CD8-positive, alpha-beta T cell (primary cell): ENCODE measurements at regions of chr3 and their contacts with region 1.

Region 1: DNA sequence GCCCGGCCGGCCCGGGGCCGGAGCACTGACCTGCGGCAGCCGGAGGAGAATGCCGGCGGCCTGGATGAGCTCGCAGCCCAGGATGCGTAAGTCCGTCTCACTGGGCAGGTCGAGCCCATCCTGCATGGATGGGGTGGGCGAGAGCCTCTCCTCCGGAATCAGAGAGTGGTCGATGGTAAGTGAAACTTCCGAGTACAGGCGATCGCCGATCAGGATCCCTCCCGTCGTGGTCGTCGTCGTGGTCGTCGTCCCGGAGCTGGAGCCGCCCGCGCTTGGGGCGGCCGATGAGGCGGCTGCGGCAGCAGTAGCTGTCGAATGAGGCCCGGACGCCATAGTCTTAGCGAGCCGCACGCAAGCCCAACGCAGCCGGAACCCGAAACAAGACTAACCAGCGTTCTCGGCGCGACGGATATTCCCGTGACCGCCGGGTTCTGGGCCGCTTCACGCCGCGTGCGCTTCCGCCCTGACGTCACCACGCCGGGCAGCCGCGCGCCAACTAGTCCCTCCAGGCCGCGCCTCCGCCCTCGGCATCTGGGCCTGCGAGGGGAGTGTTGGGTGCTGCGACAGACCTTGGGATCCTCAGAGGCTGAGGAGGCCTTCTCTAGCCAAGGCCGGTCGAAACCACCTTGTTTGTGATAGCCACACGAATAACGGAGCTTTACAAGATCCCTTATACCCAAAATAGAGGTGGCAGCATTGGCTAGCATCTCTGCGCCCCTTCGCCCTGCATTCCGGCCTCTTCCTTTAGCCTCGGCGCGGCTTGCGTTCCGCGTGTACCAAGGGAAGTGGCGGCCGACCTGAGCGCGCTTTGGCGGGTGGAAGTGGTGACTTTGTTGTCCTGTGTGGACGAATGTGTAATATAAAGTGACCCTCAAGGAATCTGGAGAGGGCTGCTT is at the start of gene CCNL1:
- DNase-seq: peak; percentile 92 to 99 (median 95)
- ATAC-seq: peak; percentile 70
- H3K4me3 ChIP-seq: peak within 1 kb of the TSS; percentile 79 to 84
- H3K4me3 Mint-ChIP-seq: peak within 1 kb of the TSS; percentile 96
- H3K27ac ChIP-seq: peak within 1 kb of the TSS; percentile 99 to 100
- H3K27ac Mint-ChIP-seq: peak within 1 kb of the TSS; percentile 100
- H3K4me1 ChIP-seq: peaks cover 50% of the 10 kb centered on the region
- H3K4me1 Mint-ChIP-seq: peaks cover 54% of the 10 kb centered on the region
- H3K27me3 ChIP-seq: no peaks in the 10 kb centered on the region
- H3K27me3 Mint-ChIP-seq: no peaks in the 10 kb centered on the region
- CTCF ChIP-seq: no peak
- total RNA-seq, gene CCNL1: 1,161 to 1,206 TPM

Region 2: DNA sequence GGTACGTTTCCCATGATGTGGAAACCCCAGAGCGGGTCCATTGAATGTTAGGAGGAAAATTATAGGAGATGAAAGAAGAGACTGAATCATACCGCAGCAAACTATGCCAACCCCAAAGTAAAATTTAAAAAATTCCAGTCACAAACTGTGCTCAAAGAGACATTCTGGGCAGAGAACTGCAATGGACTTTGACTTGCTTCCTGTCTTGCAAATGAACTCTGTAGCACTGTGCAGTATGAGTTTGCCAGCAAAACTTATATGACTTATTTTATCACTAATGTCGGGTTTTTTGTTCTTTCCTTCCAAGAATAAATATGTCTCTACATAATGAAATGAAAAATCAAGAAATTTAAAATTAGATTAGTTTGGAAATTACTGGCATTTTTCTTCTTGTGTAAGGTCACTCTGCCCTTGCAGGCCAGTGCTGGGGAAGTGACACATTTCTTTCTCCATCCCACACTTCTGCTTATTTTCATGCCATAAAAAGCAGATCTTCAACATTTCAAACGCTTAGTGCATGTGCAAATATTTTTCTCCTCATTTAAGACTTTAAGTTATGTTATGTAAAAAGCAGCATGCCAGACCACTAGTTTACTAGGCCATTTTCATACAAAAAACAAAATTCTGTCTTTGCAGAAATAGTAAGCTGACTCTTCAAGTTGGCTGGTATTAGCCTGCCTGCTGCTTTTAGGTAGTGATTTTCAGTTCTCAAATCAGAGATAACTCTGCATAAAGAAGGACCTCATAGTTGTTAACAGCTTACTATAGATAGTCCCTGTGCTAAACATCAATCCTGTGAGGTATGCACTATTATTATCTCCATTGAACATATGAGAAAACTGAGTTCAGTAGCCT is 572.9 kb before region 1 on chr3:
- CTCF ChIA-PET with region 1: no interaction called
- POLR2A ChIA-PET with region 1: no interaction called
- intact Hi-C with region 1: no loop called
- DNase-seq: no peak
- ATAC-seq: no peak
- H3K4me3 ChIP-seq: no peak overlapping the region
- H3K4me3 Mint-ChIP-seq: no peak overlapping the region
- H3K27ac ChIP-seq: no peak overlapping the region
- H3K27ac Mint-ChIP-seq: no peak overlapping the region
- H3K4me1 ChIP-seq: no peaks in the 10 kb centered on the region
- H3K4me1 Mint-ChIP-seq: no peaks in the 10 kb centered on the region
- H3K27me3 ChIP-seq: no peaks in the 10 kb centered on the region
- H3K27me3 Mint-ChIP-seq: no peaks in the 10 kb centered on the region
- CTCF ChIP-seq: no peak

Region 3: DNA sequence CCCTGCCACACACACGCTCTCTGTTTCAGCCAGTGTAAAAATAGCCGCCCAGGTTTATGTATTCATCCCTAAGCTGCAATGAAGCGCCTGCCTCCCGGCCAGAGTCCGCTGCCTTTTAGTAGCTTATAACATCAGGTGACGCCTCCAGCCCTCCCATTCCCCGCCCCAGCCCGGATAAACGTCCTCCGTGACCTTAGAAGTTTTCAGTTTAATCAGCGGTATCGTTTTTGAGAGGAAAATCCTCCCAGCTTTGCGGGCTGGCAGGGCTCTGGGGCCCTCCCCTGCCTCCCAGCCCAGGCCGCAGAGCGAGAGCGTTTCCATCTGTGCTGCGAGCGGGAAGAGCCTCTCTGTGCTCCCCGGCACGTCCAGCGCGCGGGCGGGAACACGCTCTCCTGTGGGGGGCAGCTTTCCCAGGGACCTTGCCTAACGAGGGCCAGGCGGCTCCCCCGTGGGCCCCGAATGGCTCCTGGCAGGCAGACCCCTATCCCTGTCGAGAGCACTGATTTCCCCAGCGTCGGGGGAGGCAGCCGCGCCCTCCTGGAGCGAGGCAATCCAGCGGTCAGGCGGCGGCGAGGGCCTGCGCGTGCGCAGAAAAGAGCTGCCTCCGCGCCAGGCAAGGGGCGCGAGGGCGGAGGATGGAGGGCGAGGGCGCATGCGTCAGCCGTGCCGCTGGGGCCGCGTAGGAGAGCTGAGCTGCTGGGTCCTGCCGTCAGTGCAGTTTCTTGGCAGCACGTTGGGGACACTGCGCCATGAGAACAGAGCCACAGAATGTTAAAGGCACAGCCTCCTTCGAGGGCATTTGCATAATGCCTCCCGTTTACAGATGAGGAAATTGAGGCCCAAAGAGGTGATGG is 71.2 kb before region 1 on chr3:
- CTCF ChIA-PET with region 1: no interaction called
- POLR2A ChIA-PET with region 1: interaction called, 26 read pairs
- intact Hi-C with region 1: loop called in 1 of 2 experiments (anchors 2 kb)
- DNase-seq: peak; percentile 87 to 97 (median 93)
- ATAC-seq: peak; percentile 92
- H3K4me3 ChIP-seq: peak overlapping the region; percentile 96 to 98
- H3K4me3 Mint-ChIP-seq: peak overlapping the region; percentile 88
- H3K27ac ChIP-seq: peak overlapping the region; percentile 88 to 95
- H3K27ac Mint-ChIP-seq: peak overlapping the region; percentile 96
- H3K4me1 ChIP-seq: peaks cover 18% of the 10 kb centered on the region
- H3K4me1 Mint-ChIP-seq: peaks cover 26% of the 10 kb centered on the region
- H3K27me3 ChIP-seq: no peaks in the 10 kb centered on the region
- H3K27me3 Mint-ChIP-seq: no peaks in the 10 kb centered on the region
- CTCF ChIP-seq: no peak

Region 4: GRCh38 chr3:157148196-157148889 is 11.7 kb before region 1 on chr3:
- CTCF ChIA-PET with region 1: interaction called, 4 read pairs
- POLR2A ChIA-PET with region 1: interaction called, 35 read pairs
- intact Hi-C with region 1: loop called in 1 of 2 experiments (anchors 1 kb)
- DNase-seq: peak in 1 of 9 experiments; percentile 33
- ATAC-seq: peak; percentile 17
- H3K4me3 ChIP-seq: no peak overlapping the region
- H3K4me3 Mint-ChIP-seq: no peak overlapping the region
- H3K27ac ChIP-seq: no peak overlapping the region
- H3K27ac Mint-ChIP-seq: peak overlapping the region; percentile 20
- H3K4me1 ChIP-seq: peaks cover 4% of the 10 kb centered on the region
- H3K4me1 Mint-ChIP-seq: peaks cover 41% of the 10 kb centered on the region
- H3K27me3 ChIP-seq: no peaks in the 10 kb centered on the region
- H3K27me3 Mint-ChIP-seq: no peaks in the 10 kb centered on the region
- CTCF ChIP-seq: no peak

Region 5: GRCh38 chr3:157201648-157202278 is 41.8 kb after region 1 on chr3:
- CTCF ChIA-PET with region 1: interaction called, 5 read pairs
- POLR2A ChIA-PET with region 1: interaction called, 13 read pairs
- intact Hi-C with region 1: loop called in 1 of 2 experiments (anchors 1 kb)
- DNase-seq: peak in 2 of 9 experiments; percentile 44 to 59
- ATAC-seq: no peak
- H3K4me3 ChIP-seq: no peak overlapping the region
- H3K4me3 Mint-ChIP-seq: no peak overlapping the region
- H3K27ac ChIP-seq: no peak overlapping the region
- H3K27ac Mint-ChIP-seq: no peak overlapping the region
- H3K4me1 ChIP-seq: no peaks in the 10 kb centered on the region
- H3K4me1 Mint-ChIP-seq: no peaks in the 10 kb centered on the region
- H3K27me3 ChIP-seq: no peaks in the 10 kb centered on the region
- H3K27me3 Mint-ChIP-seq: no peaks in the 10 kb centered on the region
- CTCF ChIP-seq: no peak

Region 6: GRCh38 chr3:158109804-158110657 is 950.0 kb after region 1 on chr3 and contains the start of gene RSRC1:
- CTCF ChIA-PET with region 1: no interaction called
- POLR2A ChIA-PET with region 1: interaction called, 6 read pairs
- intact Hi-C with region 1: loop called in 1 of 2 experiments (anchors 5 kb)
- DNase-seq: peak; percentile 48 to 89 (median 78)
- ATAC-seq: peak; percentile 89
- H3K4me3 ChIP-seq: peak within 1 kb of the TSS; percentile 76 to 82
- H3K4me3 Mint-ChIP-seq: peak within 1 kb of the TSS; percentile 93
- H3K27ac ChIP-seq: peak within 1 kb of the TSS; percentile 61 to 69
- H3K27ac Mint-ChIP-seq: peak within 1 kb of the TSS; percentile 85
- H3K4me1 ChIP-seq: peaks cover 44% of the 10 kb centered on the region
- H3K4me1 Mint-ChIP-seq: peaks cover 65% of the 10 kb centered on the region
- H3K27me3 ChIP-seq: peaks cover 35 to 41% of the 10 kb centered on the region in 2 experiments
- H3K27me3 Mint-ChIP-seq: peaks cover 36% of the 10 kb centered on the region
- CTCF ChIP-seq: no peak
- total RNA-seq, gene RSRC1: 21.8 to 25.0 TPM